ENCODE measurements at regions of chr7 and their contacts with region 1.

Region 1: DNA sequence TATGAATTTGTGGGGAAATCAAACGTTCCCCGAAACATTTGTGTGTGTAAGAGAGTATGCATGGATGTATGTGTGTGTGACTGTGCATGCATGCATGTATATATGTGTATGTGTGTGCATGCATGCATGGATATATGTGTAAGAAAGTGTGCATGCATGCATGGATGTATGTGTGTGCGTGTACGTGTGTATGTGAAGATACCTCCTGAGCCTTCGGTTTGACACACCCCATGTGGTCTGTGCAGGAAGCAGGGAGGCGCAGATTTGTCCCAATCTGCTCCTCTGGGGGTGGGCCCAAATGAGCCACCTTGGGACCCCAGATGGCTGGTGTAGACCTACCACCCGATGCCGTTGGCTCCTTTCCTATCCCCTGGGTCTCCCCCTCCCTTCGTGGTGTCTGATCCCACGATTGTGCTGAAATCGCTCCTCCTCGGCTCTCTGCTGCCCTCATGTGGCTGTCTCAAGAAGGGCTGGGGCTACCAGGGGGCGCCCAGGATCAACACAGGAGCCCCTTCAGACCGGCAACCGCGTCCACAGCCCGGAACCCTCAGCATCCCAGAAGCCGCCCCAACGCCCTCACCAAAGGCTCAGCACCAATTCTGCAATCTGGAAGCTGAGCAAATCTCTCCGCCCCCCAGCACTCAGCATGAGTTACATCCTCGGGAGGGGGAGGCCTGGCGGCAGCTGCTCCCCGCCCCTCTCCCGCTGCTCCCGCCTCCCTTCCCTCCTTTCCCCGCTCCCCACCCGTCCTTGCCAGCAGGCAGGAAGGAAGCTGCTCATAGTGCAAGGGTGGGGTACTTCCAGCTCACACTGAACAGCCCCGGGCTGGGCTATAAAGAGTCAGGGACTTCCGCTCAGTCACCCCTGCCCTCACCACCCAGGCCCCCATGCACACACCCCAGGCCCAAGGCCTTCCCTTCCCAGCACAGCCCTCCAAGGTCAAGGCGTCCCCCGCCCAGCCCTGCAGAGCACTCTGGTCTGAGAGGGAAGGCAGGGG is 2.3 kb upstream of the NOS3 start:
- DNase-seq: no peak
- ATAC-seq: peak; percentile 77
- H3K4me3 ChIP-seq: no peak overlapping the region
- H3K27ac ChIP-seq: no peak overlapping the region
- H3K4me1 ChIP-seq: no peaks in the 10 kb centered on the region; the same call in 1 of the 2 replicates
- H3K27me3 ChIP-seq: peaks cover 6% of the 10 kb centered on the region; the same call in 1 of the 2 replicates
- CTCF ChIP-seq: peak; percentile 73
- POLR2A ChIP-seq: no peak
- RAD21 ChIP-seq: peak; percentile 76

Region 2: GRCh38 chr7:150448789-150449147 is 539.8 kb before region 1 on chr7:
- CTCF ChIA-PET with region 1: interaction called, 4 read pairs
- POLR2A ChIA-PET with region 1: no interaction called
- dilution Hi-C with region 1: no loop called
- in situ Hi-C with region 1: no loop called
- intact Hi-C with region 1: loop called (anchors 1 kb)
- DNase-seq: peak; percentile 55
- ATAC-seq: peak; percentile 96
- H3K4me3 ChIP-seq: no peak overlapping the region
- H3K27ac ChIP-seq: no peak overlapping the region
- H3K4me1 ChIP-seq: no peaks in the 10 kb centered on the region
- H3K27me3 ChIP-seq: peaks cover 20% of the 10 kb centered on the region; the same call in 1 of the 2 replicates
- CTCF ChIP-seq: peak; percentile 80
- POLR2A ChIP-seq: no peak
- RAD21 ChIP-seq: peak; percentile 61

Region 3: GRCh38 chr7:150631866-150632864 is 356.4 kb before region 1 on chr7 and contains the start of gene GIMAP6:
- CTCF ChIA-PET with region 1: no interaction called
- POLR2A ChIA-PET with region 1: no interaction called
- dilution Hi-C with region 1: no loop called
- in situ Hi-C with region 1: no loop called
- intact Hi-C with region 1: no loop called
- DNase-seq: no peak
- ATAC-seq: no peak
- H3K4me3 ChIP-seq: no peak within 1 kb of the TSS
- H3K27ac ChIP-seq: no peak within 1 kb of the TSS
- H3K4me1 ChIP-seq: no peaks in the 10 kb centered on the region
- H3K27me3 ChIP-seq: no peaks in the 10 kb centered on the region
- CTCF ChIP-seq: no peak
- POLR2A ChIP-seq: no peak
- RAD21 ChIP-seq: no peak
- total RNA-seq, gene GIMAP6: not detected in 2 replicates

Region 4: DNA sequence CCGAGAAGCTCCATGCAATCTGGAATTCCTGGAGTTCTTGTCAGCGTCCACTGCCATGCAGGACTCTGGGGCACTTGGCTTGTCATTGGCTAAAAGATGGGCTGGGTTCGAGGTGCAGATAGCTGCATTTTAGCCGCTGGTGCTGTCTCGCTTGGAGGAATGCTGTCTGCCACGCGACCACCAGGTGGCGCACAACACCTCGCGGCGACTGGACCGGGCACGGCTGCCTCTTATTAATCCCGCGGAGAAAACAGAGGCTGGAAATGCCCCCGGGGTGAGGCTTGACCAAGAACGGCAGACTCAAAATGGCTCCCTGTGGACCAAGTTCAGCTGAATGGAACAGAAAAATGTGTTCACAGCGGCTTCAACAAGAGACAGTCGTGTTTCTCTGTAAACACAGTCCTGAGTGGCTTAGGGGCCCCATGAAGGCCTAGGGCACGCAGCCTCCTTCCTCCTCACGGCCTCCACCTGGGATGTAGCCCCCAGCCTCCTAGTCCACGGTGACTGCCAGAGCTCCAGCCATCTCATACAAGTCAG is 90.0 kb before region 1 on chr7:
- CTCF ChIA-PET with region 1: interaction called, 8 read pairs
- POLR2A ChIA-PET with region 1: no interaction called
- dilution Hi-C with region 1: no loop called
- in situ Hi-C with region 1: loop called (anchors 5 kb)
- intact Hi-C with region 1: loop called (anchors 1 kb)
- DNase-seq: peak; percentile 48
- ATAC-seq: peak; percentile 86
- H3K4me3 ChIP-seq: no peak overlapping the region
- H3K27ac ChIP-seq: no peak overlapping the region
- H3K4me1 ChIP-seq: peaks cover 6% of the 10 kb centered on the region; the same call in 1 of the 2 replicates
- H3K27me3 ChIP-seq: peaks cover 15% of the 10 kb centered on the region; the same call in 1 of the 2 replicates
- CTCF ChIP-seq: peak; percentile 91
- POLR2A ChIP-seq: no peak
- RAD21 ChIP-seq: peak; percentile 83

Region 5: DNA sequence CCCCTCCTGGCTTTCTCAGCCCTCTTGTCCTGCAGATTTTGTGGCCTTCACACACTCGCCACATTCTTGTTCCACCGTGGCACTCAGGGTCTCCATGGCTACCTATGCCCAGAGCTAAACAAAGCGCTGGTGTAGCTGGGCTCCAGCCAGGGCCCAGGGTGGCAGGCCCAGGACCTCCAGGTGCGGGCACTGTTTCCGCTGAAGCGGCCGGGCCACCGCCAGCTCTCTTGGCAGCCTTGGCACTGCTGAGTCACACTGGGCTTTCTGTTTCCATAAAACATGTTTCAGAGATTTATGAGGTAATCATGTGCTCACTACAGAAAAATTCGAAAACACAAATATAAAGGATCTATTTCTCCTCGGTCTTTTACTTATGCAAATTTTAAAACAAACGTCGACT is 84.9 kb before region 1 on chr7:
- CTCF ChIA-PET with region 1: interaction called, 8 read pairs
- POLR2A ChIA-PET with region 1: no interaction called
- dilution Hi-C with region 1: no loop called
- in situ Hi-C with region 1: loop called (anchors 5 kb)
- intact Hi-C with region 1: loop called (anchors 1 kb)
- DNase-seq: peak; percentile 81
- ATAC-seq: peak; percentile 74
- H3K4me3 ChIP-seq: no peak overlapping the region
- H3K27ac ChIP-seq: peak overlapping the region; percentile 22; the same call in 1 of the 2 replicates
- H3K4me1 ChIP-seq: peaks cover 13% of the 10 kb centered on the region
- H3K27me3 ChIP-seq: no peaks in the 10 kb centered on the region
- CTCF ChIP-seq: no peak
- POLR2A ChIP-seq: no peak
- RAD21 ChIP-seq: no peak

Region 6: DNA sequence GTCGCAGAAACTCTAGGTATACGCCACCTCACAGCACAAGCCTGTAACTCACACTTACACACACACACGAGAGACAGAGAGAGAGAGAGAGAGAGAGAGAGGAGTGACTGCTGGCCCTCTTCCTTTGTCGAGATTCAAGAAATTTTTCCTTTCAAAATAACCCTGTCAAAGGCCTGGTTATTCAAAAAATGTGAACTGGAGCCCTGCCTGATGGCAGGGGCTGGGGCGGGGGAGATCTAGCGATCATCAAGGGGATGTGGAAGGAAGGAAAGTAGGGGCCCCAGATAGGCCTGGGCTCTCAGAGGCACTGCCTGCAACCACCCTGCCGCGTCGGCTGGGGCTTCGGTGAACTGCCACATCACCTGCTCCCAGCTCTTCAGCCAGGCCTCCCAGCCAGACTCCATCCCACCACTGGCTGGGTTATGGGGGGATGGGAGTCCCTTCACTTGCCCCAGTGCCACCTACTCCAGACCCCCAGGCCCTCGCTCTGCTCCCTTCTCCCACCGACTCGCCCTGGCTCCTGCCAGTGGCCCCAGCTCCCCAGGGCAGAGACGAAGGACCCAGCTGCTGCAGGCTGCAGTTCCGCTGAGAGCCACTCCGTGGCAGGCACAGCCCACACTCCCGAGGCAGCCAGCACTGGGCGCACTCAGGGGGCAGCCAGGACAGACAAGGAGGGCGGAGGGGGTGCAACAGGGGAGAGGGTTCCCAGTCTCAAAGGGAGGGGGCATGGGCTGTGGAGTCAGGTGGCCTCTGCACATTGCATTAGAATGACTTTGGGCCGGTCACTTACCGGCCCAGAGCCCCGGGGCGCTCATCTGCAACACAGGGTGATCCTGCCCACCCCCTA is 25.8 kb before region 1 on chr7:
- CTCF ChIA-PET with region 1: interaction called, 18 read pairs
- POLR2A ChIA-PET with region 1: no interaction called
- dilution Hi-C with region 1: no loop called
- in situ Hi-C with region 1: no loop called
- intact Hi-C with region 1: loop called (anchors 1 kb)
- DNase-seq: peak; percentile 37
- ATAC-seq: peak; percentile 91
- H3K4me3 ChIP-seq: no peak overlapping the region
- H3K27ac ChIP-seq: peak overlapping the region; percentile 79
- H3K4me1 ChIP-seq: peaks cover 13% of the 10 kb centered on the region; the same call in 1 of the 2 replicates
- H3K27me3 ChIP-seq: no peaks in the 10 kb centered on the region; the same call in 1 of the 2 replicates
- CTCF ChIP-seq: peak; percentile 90
- POLR2A ChIP-seq: no peak
- RAD21 ChIP-seq: peak; percentile 90

Region 7: GRCh38 chr7:151226875-151227782 is 238.6 kb after region 1 on chr7 and contains the start of gene ABCF2:
- CTCF ChIA-PET with region 1: no interaction called
- POLR2A ChIA-PET with region 1: no interaction called
- dilution Hi-C with region 1: no loop called
- in situ Hi-C with region 1: no loop called
- intact Hi-C with region 1: no loop called
- DNase-seq: peak; percentile 99
- ATAC-seq: peak; percentile 97
- H3K4me3 ChIP-seq: peak within 1 kb of the TSS; percentile 85
- H3K27ac ChIP-seq: peak within 1 kb of the TSS; percentile 92
- H3K4me1 ChIP-seq: peaks cover 11% of the 10 kb centered on the region
- H3K27me3 ChIP-seq: no peaks in the 10 kb centered on the region
- CTCF ChIP-seq: no peak
- POLR2A ChIP-seq: peak; percentile 77
- RAD21 ChIP-seq: no peak
- total RNA-seq, gene ABCF2: 100 and 103 TPM in 2 replicates

Measured in IMR-90 (cell line).